Right lobe of liver (tissue), 6 donors: ENCODE measurements at regions of chr5 and their contacts with region 1.

Region 1: DNA sequence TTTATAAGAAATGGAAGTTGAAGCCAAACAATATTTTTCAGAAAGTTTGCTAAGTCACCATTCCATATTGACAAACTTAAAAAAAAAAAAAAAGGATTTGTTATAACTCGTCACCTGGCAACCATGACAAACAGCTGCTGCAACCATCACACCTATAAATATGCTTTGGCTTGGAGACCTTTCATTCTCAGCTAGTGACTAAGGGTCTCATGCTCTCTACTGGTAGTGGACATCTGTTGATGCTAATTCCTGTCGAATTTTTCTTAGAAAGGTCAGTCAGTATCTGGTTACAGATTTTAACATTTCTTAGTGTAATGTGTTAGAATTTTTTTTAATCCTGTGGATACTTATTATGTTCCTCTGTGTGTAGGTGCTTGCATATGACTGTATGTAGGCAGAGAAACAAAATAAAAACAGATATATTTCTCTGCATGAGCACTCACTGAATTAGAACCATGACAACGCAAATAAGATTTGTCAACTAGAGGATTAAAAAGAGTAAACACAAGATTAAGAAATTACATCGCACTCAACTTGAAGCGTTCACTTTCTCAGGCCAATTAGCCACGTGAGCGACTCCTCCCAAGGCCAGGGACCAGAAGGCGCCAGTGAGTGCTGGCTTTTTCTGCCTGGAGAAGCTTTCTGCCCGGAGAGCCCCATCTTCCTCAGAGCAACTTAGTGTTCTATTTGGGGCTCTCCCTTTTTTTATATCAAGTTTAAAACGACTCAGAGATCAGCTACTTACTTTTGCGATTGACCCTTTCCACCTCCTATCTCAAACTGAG is 27.0 kb upstream of the ZNF622 start:
- DNase-seq: no peak
- ATAC-seq: peak; percentile 9 to 55 (median 42)
- H3K4me3 ChIP-seq: no peak overlapping the region
- H3K27ac ChIP-seq: peak overlapping the region in 2 of 3 donors; percentile 9 to 20
- H3K4me1 ChIP-seq: peaks cover 0 to 31% (median 7%) of the 10 kb centered on the region in 4 donors
- H3K27me3 ChIP-seq: no peaks in the 10 kb centered on the region
- CTCF ChIP-seq: no peak
- POLR2A ChIP-seq: no peak

Region 2: DNA sequence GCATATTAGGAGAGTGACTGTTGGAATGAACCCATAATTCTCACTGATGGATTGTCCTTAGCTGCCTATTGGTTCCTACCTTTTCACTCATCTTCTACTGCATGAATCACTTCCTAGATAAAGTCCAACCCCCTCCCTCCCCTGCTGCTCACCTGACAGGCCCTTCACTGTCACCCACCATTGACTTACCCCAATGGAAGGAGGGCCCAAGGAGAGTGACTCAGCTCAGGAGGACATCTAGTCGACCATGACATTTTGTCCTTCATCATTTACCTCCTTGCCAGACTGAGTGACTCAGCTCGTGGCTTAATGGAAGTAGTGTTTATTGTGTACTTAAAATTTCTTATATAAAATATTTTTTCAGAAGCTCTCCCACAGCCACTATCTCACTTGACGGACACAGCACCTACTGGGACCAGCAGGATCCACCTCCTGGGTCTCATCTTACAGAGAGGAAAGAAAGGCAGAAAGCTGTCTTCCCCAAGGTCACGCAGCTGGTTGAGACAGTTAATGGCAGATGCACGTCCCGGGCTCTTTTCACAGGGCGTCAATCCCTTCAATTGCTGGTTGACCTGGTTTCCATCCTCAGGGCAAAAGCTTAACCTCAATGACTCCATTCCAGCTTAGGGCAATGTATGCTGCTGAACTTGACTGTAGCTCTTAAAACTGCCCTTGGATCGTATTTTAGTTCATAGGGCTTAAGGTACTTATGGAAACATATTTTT is 455.3 kb before region 1 on chr5:
- intact Hi-C with region 1: no loop called
- DNase-seq: no peak
- ATAC-seq: no peak
- H3K4me3 ChIP-seq: no peak overlapping the region
- H3K27ac ChIP-seq: no peak overlapping the region
- H3K4me1 ChIP-seq: no peaks in the 10 kb centered on the region
- H3K27me3 ChIP-seq: no peaks in the 10 kb centered on the region
- CTCF ChIP-seq: no peak
- POLR2A ChIP-seq: no peak

Region 3: GRCh38 chr5:16540421-16540820 is 47.8 kb after region 1 on chr5:
- intact Hi-C with region 1: loop called in 1 of 2 experiments (anchors 10 kb)
- DNase-seq: no peak
- ATAC-seq: peak in 1 of 4 donors; percentile 21
- H3K4me3 ChIP-seq: no peak overlapping the region
- H3K27ac ChIP-seq: peak overlapping the region; percentile 69 to 100 (median 78)
- H3K4me1 ChIP-seq: peaks cover 0 to 36% (median 11%) of the 10 kb centered on the region in 4 donors
- H3K27me3 ChIP-seq: no peaks in the 10 kb centered on the region
- CTCF ChIP-seq: no peak
- POLR2A ChIP-seq: peak; percentile 23

Region 4: GRCh38 chr5:16552666-16553343 is 60.2 kb after region 1 on chr5:
- intact Hi-C with region 1: loop called (anchors 10 kb)
- DNase-seq: peak; percentile 81 to 87 (median 81)
- ATAC-seq: peak; percentile 88 to 93 (median 92)
- H3K4me3 ChIP-seq: no peak overlapping the region
- H3K27ac ChIP-seq: no peak overlapping the region
- H3K4me1 ChIP-seq: peaks cover 0 to 11% (median 0%) of the 10 kb centered on the region in 4 donors
- H3K27me3 ChIP-seq: no peaks in the 10 kb centered on the region
- CTCF ChIP-seq: peak; percentile 82 to 90 (median 84)
- POLR2A ChIP-seq: no peak